Motor neuron (in vitro differentiated cells): ENCODE measurements at regions of chr5 and their contacts with region 1.

Region 1: GRCh38 chr5:67149951-67150523 is 46.6 kb downstream of the CD180 start:
- ATAC-seq: peak in 2 of 8 experiments; percentile 28 to 55
- H3K4me3 ChIP-seq: no peak overlapping the region
- H3K27ac ChIP-seq: no peak overlapping the region
- H3K4me1 ChIP-seq: peaks cover 0 to 10% of the 10 kb centered on the region in 2 donors

Region 2: DNA sequence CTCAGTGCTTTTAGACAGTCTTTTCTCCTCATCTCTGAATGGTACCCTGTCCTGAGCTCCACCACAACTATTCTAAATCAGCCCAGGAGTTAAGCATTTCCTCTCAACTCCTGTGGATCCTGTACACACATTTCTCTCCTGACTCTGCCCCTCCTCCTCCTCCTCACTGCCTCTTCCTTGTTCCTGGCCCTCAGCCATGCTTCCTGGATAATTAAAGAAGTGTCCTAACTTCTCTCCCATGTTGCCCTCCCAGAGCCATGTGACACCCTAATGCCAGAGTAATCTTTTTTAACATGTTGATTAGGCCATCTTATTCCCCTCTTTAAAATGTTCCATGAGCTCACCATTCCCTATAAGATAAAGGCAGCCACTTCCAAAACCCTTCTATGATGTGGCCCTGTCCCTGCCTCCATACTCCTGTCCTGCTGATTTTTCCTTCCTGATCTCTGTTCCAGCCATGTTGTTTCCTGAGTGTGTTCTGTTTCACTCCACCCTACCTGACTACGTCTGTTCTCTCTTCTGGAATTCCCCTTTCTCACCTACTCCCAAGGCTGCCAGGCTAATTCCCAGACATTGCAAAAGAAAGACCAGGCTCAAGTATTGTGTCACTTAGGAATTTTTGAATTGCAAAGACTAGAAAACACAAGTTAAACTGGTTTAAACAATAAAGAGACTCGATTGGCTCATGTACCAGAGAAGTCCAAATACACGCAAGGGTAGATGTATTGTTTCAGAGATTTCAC is 258.7 kb before region 1 on chr5:
- in situ Hi-C with region 1: no loop called
- ATAC-seq: peak in 1 of 8 experiments; percentile 36
- H3K4me3 ChIP-seq: no peak overlapping the region
- H3K27ac ChIP-seq: no peak overlapping the region
- H3K4me1 ChIP-seq: peaks cover 4 to 27% of the 10 kb centered on the region in 2 donors

Region 3: GRCh38 chr5:66987949-66988838 is 161.8 kb before region 1 on chr5:
- in situ Hi-C with region 1: loop called in 2 of 9 experiments (anchors 25 kb)
- ATAC-seq: peak in 2 of 8 experiments; percentile 37 to 47
- H3K4me3 ChIP-seq: no peak overlapping the region
- H3K27ac ChIP-seq: no peak overlapping the region
- H3K4me1 ChIP-seq: peaks cover 0 to under 1% of the 10 kb centered on the region in 2 donors